Tibial artery (tissue), 4 donors: ENCODE measurements at regions of chr19 and their contacts with region 1.

Region 1: DNA sequence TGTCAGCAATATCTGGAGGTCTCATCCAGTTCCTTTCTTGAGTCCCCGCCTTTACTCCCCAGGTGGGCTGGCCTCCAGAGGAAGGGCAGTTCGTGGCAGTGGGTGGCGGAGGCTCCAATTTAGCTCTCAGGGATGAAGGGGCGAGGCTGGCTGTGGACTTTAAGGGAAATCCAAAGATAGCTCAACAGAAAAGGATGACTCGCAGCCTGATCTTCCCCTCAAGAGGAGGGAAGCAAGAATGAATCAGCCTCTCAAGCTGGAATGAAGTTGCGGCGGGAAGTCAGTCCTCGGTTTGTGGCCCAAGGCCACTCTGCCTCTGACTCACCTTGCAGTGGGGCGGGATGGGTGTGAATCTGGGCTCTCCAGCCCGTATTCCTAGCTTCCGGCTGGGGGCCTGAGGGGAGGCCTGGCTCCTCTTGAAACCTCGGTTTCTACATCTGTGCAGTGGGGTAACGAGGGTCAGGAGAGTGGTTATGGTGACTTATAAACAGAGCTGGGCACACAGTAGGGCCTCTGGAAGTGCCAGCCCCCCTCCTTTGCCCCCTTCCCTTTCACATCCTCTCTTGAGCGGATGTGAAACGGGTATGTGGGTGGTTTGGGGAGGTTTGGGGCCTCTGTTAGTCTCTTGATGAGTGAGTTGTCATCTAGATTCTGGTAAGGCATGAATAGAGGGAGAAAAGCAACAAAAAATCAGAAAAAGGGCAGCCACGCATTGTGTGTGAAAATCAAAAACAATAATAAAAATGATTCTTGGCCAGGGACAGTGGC is 10.5 kb upstream of the SMG9 start:
- DNase-seq: peak; percentile 77 to 86
- H3K4me3 ChIP-seq: no peak overlapping the region
- H3K27ac ChIP-seq: peak overlapping the region; percentile 51 to 60
- H3K4me1 ChIP-seq: peaks cover 0 to 16% (median 11%) of the 10 kb centered on the region in 4 donors
- H3K27me3 ChIP-seq: no peaks in the 10 kb centered on the region
- CTCF ChIP-seq: no peak

Region 2: DNA sequence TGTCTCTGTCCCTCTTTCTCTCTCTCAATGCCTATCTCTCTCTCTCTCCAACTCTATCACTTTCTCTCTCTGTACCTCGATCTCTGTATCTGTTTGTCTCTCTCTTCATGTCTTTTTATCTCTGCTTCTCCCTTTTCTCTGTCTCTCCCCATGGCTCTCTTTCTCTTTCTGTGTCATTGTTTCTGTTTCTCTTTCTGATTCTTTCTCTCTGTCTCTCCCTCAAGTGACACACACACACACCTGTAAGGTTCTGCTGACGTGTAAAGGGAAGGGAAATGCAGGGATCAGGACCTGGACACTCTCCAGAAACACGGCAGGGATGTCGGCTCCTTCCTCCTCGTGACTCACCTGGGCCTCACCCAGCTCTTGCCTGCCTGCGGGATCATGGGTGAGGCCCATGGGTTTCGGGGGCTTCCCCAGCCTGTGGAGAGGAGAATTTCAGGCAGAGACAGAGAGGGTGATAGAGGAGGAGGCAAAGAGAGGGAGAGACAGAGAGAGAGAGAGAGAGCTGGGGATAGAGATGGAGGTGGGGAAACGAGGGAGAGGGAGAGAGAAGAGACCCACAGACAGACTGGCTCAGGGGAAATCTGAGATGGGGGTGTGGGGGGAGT is 89.9 kb before region 1 on chr19:
- intact Hi-C with region 1: loop called (anchors 10 kb)
- DNase-seq: no peak
- H3K4me3 ChIP-seq: no peak overlapping the region
- H3K27ac ChIP-seq: no peak overlapping the region
- H3K4me1 ChIP-seq: peaks cover 0 to 3% (median 2%) of the 10 kb centered on the region in 4 donors
- H3K27me3 ChIP-seq: no peaks in the 10 kb centered on the region
- CTCF ChIP-seq: no peak

Region 3: DNA sequence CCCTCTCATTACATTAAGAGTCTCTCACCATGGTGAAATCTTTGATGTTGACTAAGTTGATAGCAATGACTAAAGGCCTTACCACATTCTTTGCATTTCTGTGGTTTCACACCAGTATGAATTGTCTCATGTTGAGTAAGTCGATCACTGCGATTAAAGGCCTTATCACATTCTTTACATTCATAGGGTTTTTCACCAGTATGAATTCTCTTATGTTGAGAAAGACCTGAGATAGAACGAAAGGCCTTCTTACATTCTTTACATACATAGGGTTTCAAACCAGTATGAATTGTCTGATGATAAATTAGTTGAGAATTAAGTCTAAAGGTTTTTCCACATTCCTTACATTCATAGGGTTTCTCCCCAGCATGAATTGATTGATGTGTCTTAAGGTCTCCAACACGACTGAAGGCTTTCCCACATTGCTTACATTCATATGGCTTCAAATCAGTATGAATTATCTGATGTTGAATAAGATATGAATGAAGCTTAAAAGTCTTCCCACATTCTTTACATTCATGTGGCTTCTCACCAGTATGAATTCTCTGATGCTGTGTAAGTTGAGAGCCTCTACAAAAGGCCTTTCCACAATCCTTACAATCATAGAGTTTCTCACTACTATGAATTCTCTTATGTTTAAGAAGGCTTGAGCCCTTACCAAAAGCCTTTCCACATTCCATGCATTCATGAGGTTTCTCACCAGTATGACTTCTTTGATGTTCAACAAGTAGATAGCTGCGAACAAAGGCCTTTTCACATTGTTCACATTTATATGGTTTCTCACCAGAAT is 107.4 kb after region 1 on chr19:
- intact Hi-C with region 1: no loop called
- DNase-seq: no peak
- H3K4me3 ChIP-seq: no peak overlapping the region
- H3K27ac ChIP-seq: no peak overlapping the region
- H3K4me1 ChIP-seq: no peaks in the 10 kb centered on the region
- H3K27me3 ChIP-seq: no peaks in the 10 kb centered on the region
- CTCF ChIP-seq: no peak